ENCODE measurements at regions of chr12 and their contacts with region 1.

Region 1: DNA sequence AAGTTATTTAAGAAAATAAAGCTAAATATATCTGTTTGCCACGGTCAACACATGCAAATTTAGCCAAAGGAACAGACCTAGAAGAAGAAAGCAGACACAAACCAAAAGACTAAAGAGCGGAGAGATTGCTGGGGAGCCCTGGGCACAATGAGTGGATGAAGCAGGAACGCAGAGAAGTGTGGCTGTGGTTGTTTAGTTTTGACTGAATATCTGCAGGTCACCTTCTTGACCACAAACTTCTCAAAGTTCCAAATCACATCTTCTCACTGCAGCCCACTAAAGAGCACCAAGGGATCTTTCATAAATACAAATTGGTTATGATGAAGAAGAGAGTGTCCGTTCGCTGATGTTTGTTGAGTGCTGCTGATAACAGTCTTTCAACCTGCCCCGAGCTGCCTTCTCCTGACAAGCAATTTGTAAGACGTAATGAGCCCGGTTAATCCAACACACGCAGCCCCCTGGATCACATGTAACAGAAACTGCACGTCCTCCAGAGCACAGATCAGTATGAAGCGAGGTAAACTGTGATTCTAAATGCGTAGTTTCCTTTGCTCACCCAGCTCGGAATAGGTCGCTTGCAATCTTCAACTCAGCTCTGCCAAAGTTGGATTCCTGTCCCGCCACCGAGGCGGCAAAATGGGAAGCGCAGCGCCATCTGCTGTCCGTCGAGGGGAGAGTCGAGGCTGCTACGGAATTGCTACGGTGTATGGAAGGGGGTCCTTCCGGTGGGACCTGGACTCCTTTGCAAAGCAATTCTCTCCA is 120.8 kb downstream of the GXYLT1 start:
- DNase-seq: peak; percentile 81
- H3K4me3 ChIP-seq: peak overlapping the region in 2 of 3 experiments; percentile 31 to 58
- H3K27ac ChIP-seq: peak overlapping the region; percentile 30
- H3K4me1 ChIP-seq: peaks cover 23% of the 10 kb centered on the region
- H3K27me3 ChIP-seq: no peaks in the 10 kb centered on the region
- CTCF ChIP-seq: peak; percentile 93 to 96
- POLR2A ChIP-seq: no peak

Region 2: GRCh38 chr12:41011939-41012338 is 1012.0 kb before region 1 on chr12:
- CTCF ChIA-PET with region 1: interaction called, 3 read pairs
- POLR2A ChIA-PET with region 1: no interaction called
- dilution Hi-C with region 1: no loop called
- intact Hi-C with region 1: loop called (anchors 1 kb)
- DNase-seq: peak; percentile 19
- H3K4me3 ChIP-seq: no peak overlapping the region
- H3K27ac ChIP-seq: no peak overlapping the region
- H3K4me1 ChIP-seq: peaks cover 22% of the 10 kb centered on the region
- H3K27me3 ChIP-seq: no peaks in the 10 kb centered on the region
- CTCF ChIP-seq: peak in 1 of 2 donors; percentile 26
- POLR2A ChIP-seq: no peak

Region 3: GRCh38 chr12:41367726-41368405 is 656.0 kb before region 1 on chr12:
- CTCF ChIA-PET with region 1: interaction called, 12 read pairs
- POLR2A ChIA-PET with region 1: no interaction called
- dilution Hi-C with region 1: no loop called
- intact Hi-C with region 1: loop called (anchors 10 kb)
- DNase-seq: no peak
- H3K4me3 ChIP-seq: no peak overlapping the region
- H3K27ac ChIP-seq: no peak overlapping the region
- H3K4me1 ChIP-seq: no peaks in the 10 kb centered on the region
- H3K27me3 ChIP-seq: no peaks in the 10 kb centered on the region
- CTCF ChIP-seq: peak; percentile 28
- POLR2A ChIP-seq: no peak

Region 4: DNA sequence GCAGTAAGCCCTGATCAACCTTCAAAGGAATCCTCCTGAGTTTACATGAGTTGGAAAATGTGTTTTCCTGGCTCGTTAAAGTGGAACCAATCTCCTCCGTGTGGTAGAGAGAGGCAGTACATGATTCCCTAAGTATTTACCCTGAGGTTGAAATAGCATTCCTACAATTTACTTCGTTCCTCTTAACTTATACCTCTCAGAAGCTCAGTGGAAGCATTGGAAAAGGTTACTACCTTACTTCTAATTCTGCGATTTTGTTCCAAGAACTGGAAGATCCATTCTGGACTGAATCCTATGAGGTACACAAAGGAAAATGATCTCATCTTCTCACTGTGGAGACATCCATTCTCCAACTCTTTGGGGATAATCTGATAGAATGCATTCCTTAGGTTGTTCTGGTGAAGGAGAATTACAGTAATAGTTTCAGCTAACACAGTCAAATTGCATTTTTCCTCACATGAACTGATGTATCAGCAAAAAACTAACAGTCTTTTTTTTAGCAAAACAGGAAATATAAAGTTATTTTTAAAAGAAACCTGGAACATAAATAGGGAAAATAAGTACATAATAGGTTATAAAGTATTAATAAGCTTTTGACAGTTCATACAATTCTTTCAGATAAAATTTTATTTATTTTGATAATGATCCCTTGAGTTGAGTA is 360.2 kb before region 1 on chr12:
- CTCF ChIA-PET with region 1: interaction called, 21 read pairs
- POLR2A ChIA-PET with region 1: no interaction called
- dilution Hi-C with region 1: no loop called
- intact Hi-C with region 1: no loop called
- DNase-seq: peak; percentile 50
- H3K4me3 ChIP-seq: no peak overlapping the region
- H3K27ac ChIP-seq: no peak overlapping the region
- H3K4me1 ChIP-seq: no peaks in the 10 kb centered on the region
- H3K27me3 ChIP-seq: no peaks in the 10 kb centered on the region
- CTCF ChIP-seq: peak; percentile 35 to 43
- POLR2A ChIP-seq: no peak

Region 5: DNA sequence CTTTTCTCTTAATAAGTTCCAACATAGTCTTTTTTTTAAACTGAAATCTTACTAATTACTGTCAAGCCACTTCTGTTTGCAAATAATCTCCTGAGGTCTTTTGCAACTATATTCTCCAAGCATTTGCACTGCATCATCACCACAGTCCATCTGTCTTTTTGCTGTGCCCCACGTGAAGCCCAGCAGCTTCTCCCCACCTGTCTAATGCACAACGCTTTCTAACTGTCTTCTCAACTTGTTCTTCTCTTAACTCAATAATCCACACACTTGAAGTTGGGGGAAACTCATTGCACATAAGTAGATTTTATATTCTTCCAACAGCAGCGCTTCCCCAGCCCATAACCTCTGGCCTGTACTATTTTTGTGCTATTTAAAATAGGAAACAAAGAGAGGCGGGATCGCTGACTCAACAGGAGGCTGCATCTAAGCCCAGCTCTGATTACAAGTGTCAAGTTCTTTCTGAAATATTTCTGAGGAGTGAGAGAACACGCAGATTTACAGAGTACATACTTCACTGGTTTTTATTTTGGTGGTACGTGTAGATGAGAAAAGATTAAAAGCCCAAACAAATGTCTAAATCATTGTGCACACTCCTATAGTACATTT is 106.0 kb before region 1 on chr12:
- CTCF ChIA-PET with region 1: interaction called, 10 read pairs
- POLR2A ChIA-PET with region 1: no interaction called
- dilution Hi-C with region 1: no loop called
- intact Hi-C with region 1: no loop called
- DNase-seq: peak; percentile 73
- H3K4me3 ChIP-seq: no peak overlapping the region
- H3K27ac ChIP-seq: no peak overlapping the region
- H3K4me1 ChIP-seq: peaks cover 13% of the 10 kb centered on the region
- H3K27me3 ChIP-seq: no peaks in the 10 kb centered on the region
- CTCF ChIP-seq: no peak
- POLR2A ChIP-seq: no peak

Region 6: GRCh38 chr12:42325653-42326474 is 301.9 kb after region 1 on chr12 and contains the starts of genes PPHLN1 and ZCRB1:
- CTCF ChIA-PET with region 1: interaction called, 10 read pairs
- POLR2A ChIA-PET with region 1: no interaction called
- dilution Hi-C with region 1: no loop called
- intact Hi-C with region 1: loop called (anchors 10 kb)
- DNase-seq: peak; percentile 69
- H3K4me3 ChIP-seq: peak within 1 kb of the TSS; percentile 64 to 97 (median 90)
- H3K27ac ChIP-seq: peak within 1 kb of the TSS; percentile 58
- H3K4me1 ChIP-seq: peaks cover 21% of the 10 kb centered on the region
- H3K27me3 ChIP-seq: no peaks in the 10 kb centered on the region
- CTCF ChIP-seq: no peak
- POLR2A ChIP-seq: peak; percentile 85
- total RNA-seq, gene PPHLN1: 58.0 and 62.2 TPM in 2 replicates
- total RNA-seq, gene ZCRB1: 52.9 and 55.3 TPM in 2 replicates

Region 7: GRCh38 chr12:42617622-42618021 is 593.7 kb after region 1 on chr12:
- CTCF ChIA-PET with region 1: no interaction called
- POLR2A ChIA-PET with region 1: no interaction called
- dilution Hi-C with region 1: no loop called
- intact Hi-C with region 1: no loop called
- DNase-seq: peak; percentile 28
- H3K4me3 ChIP-seq: no peak overlapping the region
- H3K27ac ChIP-seq: no peak overlapping the region
- H3K4me1 ChIP-seq: no peaks in the 10 kb centered on the region
- H3K27me3 ChIP-seq: no peaks in the 10 kb centered on the region
- CTCF ChIP-seq: no peak
- POLR2A ChIP-seq: no peak

Measured in endothelial cell of umbilical vein (primary cell).